ENCODE measurements at regions of chr1 and their contacts with region 1.

Region 1: GRCh38 chr1:67760030-67760821 is 73.0 kb downstream of the GNG12 start:
- DNase-seq: no peak
- H3K4me3 ChIP-seq: no peak overlapping the region
- H3K27ac ChIP-seq: peak overlapping the region; percentile 49
- H3K27me3 ChIP-seq: no peaks in the 10 kb centered on the region
- CTCF ChIP-seq: peak; percentile 88

Region 2: DNA sequence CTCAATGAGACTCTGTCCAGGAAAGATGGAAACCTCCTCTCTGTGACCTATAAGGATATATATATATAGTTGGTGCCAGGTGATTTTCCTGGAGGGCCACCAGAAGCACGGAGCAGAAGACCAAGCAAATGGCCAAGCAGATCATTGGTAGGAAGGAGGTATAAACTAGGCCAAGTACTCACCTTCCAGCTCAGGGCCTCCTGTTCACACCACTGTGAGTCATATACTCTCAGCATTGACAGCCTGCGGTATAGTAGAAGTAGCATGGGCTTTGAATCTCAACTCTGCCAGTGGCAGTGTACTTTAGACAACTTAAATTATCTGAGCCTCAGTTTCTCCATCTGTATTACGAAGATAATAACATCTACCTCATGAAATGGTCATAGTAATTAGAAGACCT is 437.1 kb before region 1 on chr1:
- CTCF ChIA-PET with region 1: no interaction called
- POLR2A ChIA-PET with region 1: no interaction called
- DNase-seq: no peak
- H3K4me3 ChIP-seq: no peak overlapping the region
- H3K27ac ChIP-seq: no peak overlapping the region
- H3K27me3 ChIP-seq: peaks cover 4% of the 10 kb centered on the region
- CTCF ChIP-seq: no peak

Region 3: DNA sequence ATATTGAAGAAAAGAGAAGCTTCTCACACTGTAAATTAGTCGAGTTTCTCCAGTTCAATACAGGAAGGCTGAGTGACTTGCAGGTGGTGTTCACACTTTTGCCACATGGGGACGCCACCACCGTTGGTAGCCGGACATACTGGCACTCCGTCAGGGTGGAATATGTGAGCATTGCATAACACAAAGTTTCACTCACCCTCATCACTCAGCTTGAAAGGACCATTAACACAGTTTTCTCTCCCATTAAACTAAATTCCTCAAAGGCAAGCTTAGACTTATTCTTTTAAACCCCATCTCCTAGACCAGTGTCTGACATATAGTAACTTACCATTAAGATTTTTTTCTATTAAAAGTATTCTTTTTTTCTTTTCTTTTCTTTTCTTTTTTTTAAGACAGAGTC is 224.8 kb before region 1 on chr1:
- CTCF ChIA-PET with region 1: interaction called, 456 read pairs
- POLR2A ChIA-PET with region 1: interaction called, 4 read pairs
- DNase-seq: peak; percentile 65
- H3K4me3 ChIP-seq: no peak overlapping the region
- H3K27ac ChIP-seq: no peak overlapping the region
- H3K27me3 ChIP-seq: no peaks in the 10 kb centered on the region
- CTCF ChIP-seq: peak; percentile 99

Region 4: GRCh38 chr1:67561704-67562113 is 198.5 kb before region 1 on chr1:
- CTCF ChIA-PET with region 1: interaction called, 73 read pairs
- POLR2A ChIA-PET with region 1: no interaction called
- DNase-seq: peak; percentile 65
- H3K4me3 ChIP-seq: no peak overlapping the region
- H3K27ac ChIP-seq: no peak overlapping the region
- H3K27me3 ChIP-seq: no peaks in the 10 kb centered on the region
- CTCF ChIP-seq: peak; percentile 96

Region 5: GRCh38 chr1:67685067-67685557 is 75.1 kb before region 1 on chr1 and contains the start of gene GADD45A:
- CTCF ChIA-PET with region 1: interaction called, 51 read pairs
- POLR2A ChIA-PET with region 1: interaction called, 16 read pairs
- DNase-seq: peak; percentile 99
- H3K4me3 ChIP-seq: peak within 1 kb of the TSS; percentile 89
- H3K27ac ChIP-seq: peak within 1 kb of the TSS; percentile 97
- H3K27me3 ChIP-seq: no peaks in the 10 kb centered on the region
- CTCF ChIP-seq: no peak
- polyA plus RNA-seq, gene GADD45A: 33.7 and 41.8 TPM in 2 replicates

Region 6: DNA sequence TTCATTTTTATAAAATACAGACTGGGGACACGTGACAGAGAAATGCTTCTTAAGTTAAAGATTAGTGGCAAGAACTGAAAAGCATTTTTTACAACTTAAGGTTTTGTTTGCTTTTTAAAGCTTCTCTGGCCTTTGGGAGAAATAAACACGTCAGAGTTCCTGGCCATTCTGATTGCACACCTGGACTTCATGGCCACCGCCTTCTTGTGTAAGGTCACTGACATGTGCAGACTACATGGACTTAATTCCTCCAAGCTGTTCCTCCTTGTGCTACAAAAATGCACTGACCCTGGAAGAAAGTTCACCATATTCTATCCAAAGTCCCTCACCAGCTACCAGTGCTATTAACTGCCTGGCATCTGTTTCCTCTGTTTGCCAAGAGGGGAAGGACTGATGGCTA is 19.1 kb before region 1 on chr1:
- CTCF ChIA-PET with region 1: interaction called, 32 read pairs
- POLR2A ChIA-PET with region 1: no interaction called
- DNase-seq: no peak
- H3K4me3 ChIP-seq: no peak overlapping the region
- H3K27ac ChIP-seq: no peak overlapping the region
- H3K27me3 ChIP-seq: no peaks in the 10 kb centered on the region
- CTCF ChIP-seq: no peak

Region 7: GRCh38 chr1:67823615-67824014 is 63.4 kb after region 1 on chr1:
- CTCF ChIA-PET with region 1: interaction called, 12 read pairs
- POLR2A ChIA-PET with region 1: no interaction called
- DNase-seq: no peak
- H3K4me3 ChIP-seq: no peak overlapping the region
- H3K27ac ChIP-seq: no peak overlapping the region
- H3K27me3 ChIP-seq: no peaks in the 10 kb centered on the region
- CTCF ChIP-seq: no peak

Region 8: GRCh38 chr1:67853704-67854103 is 93.5 kb after region 1 on chr1:
- CTCF ChIA-PET with region 1: interaction called, 110 read pairs
- POLR2A ChIA-PET with region 1: no interaction called
- DNase-seq: no peak
- H3K4me3 ChIP-seq: no peak overlapping the region
- H3K27ac ChIP-seq: no peak overlapping the region
- H3K27me3 ChIP-seq: no peaks in the 10 kb centered on the region
- CTCF ChIP-seq: peak; percentile 99

Region 9: GRCh38 chr1:68197891-68198290 is 437.7 kb after region 1 on chr1:
- CTCF ChIA-PET with region 1: no interaction called
- POLR2A ChIA-PET with region 1: no interaction called
- DNase-seq: no peak
- H3K4me3 ChIP-seq: no peak overlapping the region
- H3K27ac ChIP-seq: no peak overlapping the region
- H3K27me3 ChIP-seq: no peaks in the 10 kb centered on the region
- CTCF ChIP-seq: no peak

Measured in AG04450 (cell line).